ENCODE measurements at regions of chr3 and their contacts with region 1.

Region 1: DNA sequence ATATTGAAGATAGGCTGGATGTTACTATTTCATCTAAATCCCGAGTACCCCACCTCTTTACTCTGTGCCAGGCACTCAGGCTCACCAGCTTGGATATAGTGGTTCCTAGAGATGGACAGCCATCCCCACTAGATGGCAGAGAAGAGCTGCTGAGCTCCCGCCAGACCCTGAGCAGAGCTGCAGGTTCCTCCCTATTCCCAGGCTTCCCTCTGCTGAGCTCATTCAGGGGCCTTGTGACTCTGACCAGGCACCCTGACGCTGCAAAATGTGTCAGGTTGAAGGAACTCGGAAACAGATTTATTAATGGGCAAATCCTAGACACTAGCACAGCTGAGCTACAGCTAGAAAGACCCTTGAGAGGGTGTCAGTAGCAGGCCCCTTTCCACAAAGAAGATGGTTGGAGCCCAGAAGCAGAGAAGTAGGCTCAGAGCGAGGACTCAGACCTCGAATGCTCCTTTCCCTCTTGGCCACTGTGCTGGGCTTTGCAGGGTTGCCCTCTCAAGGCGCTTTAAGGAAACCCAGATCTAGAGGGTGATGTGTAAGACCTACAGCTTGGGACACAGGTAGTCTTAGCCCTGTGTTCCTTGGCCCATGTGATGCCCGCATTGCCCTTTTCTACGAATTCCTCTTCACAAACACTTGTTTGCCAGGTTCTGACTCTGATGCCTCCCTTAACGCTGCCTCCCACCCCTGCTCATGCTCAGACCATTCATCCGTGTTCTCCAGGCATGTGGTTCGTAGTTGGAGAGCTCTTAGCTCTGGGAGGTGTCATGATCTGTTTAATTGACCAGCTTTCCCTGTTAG is 38.0 kb upstream of the RHO start:
- DNase-seq: peak; percentile 85
- H3K4me3 Mint-ChIP-seq: no peak overlapping the region
- H3K27ac Mint-ChIP-seq: no peak overlapping the region
- H3K4me1 Mint-ChIP-seq: peaks cover 28% of the 10 kb centered on the region
- H3K27me3 Mint-ChIP-seq: no peaks in the 10 kb centered on the region
- CTCF ChIP-seq: peak; percentile 93

Region 2: DNA sequence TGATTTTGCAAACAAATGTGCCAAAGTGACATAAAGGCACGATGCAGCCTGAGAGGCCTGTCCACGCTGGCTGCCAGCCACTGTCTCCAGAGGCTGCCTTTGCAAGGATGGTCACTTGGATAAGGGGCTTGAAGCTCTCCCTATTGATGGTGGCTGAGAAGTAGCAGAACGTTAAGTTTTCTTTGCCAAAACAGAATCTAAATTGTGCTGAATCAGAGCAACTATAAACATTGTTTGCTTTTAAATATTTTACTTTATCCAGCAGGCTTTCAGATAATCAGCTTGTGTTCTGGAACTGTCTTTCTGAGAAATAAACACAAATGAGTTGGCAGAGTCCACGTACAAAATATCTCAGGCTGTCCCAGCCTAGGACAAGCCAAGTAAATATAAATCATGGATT is 283.0 kb before region 1 on chr3:
- CTCF ChIA-PET with region 1: no interaction called
- POLR2A ChIA-PET with region 1: no interaction called
- intact Hi-C with region 1: no loop called
- DNase-seq: no peak
- H3K4me3 Mint-ChIP-seq: no peak overlapping the region
- H3K27ac Mint-ChIP-seq: no peak overlapping the region
- H3K4me1 Mint-ChIP-seq: peaks cover 12% of the 10 kb centered on the region
- H3K27me3 Mint-ChIP-seq: no peaks in the 10 kb centered on the region
- CTCF ChIP-seq: no peak

Region 3: DNA sequence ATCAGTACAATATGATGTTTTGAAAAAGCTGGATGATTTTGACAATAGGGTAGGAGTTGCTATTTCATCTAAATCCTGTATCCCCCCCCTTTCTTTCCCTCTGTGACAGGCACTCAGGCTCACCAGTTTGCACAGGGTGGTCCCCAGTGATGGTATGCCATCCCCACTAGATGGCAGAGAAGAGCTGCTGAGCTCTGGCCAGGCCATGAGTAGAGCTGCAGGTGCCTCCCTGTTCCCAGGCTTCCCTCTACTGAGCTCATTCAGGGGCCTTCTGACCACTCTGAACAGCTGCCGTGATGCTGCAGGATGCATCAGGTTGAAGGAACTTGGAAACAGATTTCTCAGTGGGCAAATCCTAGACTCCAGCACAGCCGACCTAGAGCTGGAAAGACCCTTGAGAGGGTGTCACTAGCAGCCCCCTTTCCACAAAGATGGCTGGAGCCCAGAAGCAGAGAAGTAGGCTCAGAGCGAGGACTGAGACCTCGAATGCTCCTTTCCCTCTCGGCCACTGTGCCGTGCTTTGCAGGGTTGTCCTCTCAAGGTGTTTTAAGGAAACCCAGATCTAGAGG is 107.1 kb before region 1 on chr3:
- CTCF ChIA-PET with region 1: interaction called, 4 read pairs
- POLR2A ChIA-PET with region 1: no interaction called
- intact Hi-C with region 1: loop called (anchors 5 kb)
- DNase-seq: peak; percentile 77
- H3K4me3 Mint-ChIP-seq: no peak overlapping the region
- H3K27ac Mint-ChIP-seq: no peak overlapping the region
- H3K4me1 Mint-ChIP-seq: no peaks in the 10 kb centered on the region
- H3K27me3 Mint-ChIP-seq: no peaks in the 10 kb centered on the region
- CTCF ChIP-seq: peak; percentile 61

Region 4: GRCh38 chr3:129439817-129440617 is 50.4 kb before region 1 on chr3 and contains the starts of genes IFT122 and MBD4:
- CTCF ChIA-PET with region 1: interaction called, 17 read pairs
- POLR2A ChIA-PET with region 1: interaction called, 75 read pairs
- intact Hi-C with region 1: loop called (anchors 2 kb)
- DNase-seq: peak; percentile 99
- H3K4me3 Mint-ChIP-seq: peak within 1 kb of the TSS; percentile 83
- H3K27ac Mint-ChIP-seq: peak within 1 kb of the TSS; percentile 96
- H3K4me1 Mint-ChIP-seq: peaks cover 49% of the 10 kb centered on the region
- H3K27me3 Mint-ChIP-seq: no peaks in the 10 kb centered on the region
- CTCF ChIP-seq: no peak
- total RNA-seq, gene IFT122: 18.7 and 21.0 TPM in 2 replicates
- total RNA-seq, gene MBD4: 30.6 and 35.8 TPM in 2 replicates

Region 5: DNA sequence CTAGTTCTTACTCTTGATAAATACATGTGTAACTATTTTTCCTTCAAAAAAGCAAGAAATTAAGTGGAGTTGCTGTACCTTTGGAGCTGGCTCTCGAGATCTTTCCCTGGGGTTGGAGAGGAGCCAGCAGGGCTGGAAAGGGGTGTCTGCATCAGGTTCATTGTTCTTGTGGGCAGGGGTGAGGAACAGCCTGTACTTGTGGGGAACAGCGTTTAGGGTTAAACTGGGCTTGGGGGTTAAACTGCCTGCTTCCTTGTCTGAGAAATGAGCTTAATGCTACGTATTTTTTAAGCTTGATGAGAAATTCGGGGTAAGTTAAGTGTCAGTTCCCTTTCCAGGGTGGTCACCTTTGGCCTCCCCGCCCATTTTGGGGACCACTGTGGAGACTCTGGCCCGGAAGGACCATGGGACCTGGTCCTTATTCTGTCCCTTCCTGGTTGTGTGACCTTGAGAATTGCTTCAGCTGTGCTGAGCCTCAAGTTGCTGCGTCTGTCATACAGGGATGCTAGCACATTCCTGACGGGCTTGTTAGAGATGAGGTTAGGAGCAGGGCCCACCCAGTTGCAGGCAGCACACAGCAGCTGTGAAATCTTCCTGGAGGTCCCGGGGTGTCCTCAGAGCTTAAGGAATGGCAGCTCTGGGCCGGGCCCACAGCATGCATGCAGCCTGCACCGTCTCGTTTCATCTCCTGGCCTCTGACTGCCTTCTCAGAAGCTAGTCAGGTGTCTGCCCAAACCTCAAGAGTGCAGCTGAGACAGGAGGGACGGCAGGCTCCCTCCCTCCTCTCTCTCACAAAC is 64.1 kb after region 1 on chr3:
- CTCF ChIA-PET with region 1: interaction called, 10 read pairs
- POLR2A ChIA-PET with region 1: no interaction called
- intact Hi-C with region 1: no loop called
- DNase-seq: no peak
- H3K4me3 Mint-ChIP-seq: no peak overlapping the region
- H3K27ac Mint-ChIP-seq: no peak overlapping the region
- H3K4me1 Mint-ChIP-seq: peaks cover 1% of the 10 kb centered on the region
- H3K27me3 Mint-ChIP-seq: no peaks in the 10 kb centered on the region
- CTCF ChIP-seq: no peak

Region 6: GRCh38 chr3:129627429-129628168 is 137.2 kb after region 1 on chr3:
- CTCF ChIA-PET with region 1: interaction called, 16 read pairs
- POLR2A ChIA-PET with region 1: interaction called, 13 read pairs
- intact Hi-C with region 1: loop called (anchors 2 kb)
- DNase-seq: peak; percentile 92
- H3K4me3 Mint-ChIP-seq: peak overlapping the region; percentile 71
- H3K27ac Mint-ChIP-seq: peak overlapping the region; percentile 74
- H3K4me1 Mint-ChIP-seq: peaks cover 20% of the 10 kb centered on the region
- H3K27me3 Mint-ChIP-seq: no peaks in the 10 kb centered on the region
- CTCF ChIP-seq: peak; percentile 63

Region 7: DNA sequence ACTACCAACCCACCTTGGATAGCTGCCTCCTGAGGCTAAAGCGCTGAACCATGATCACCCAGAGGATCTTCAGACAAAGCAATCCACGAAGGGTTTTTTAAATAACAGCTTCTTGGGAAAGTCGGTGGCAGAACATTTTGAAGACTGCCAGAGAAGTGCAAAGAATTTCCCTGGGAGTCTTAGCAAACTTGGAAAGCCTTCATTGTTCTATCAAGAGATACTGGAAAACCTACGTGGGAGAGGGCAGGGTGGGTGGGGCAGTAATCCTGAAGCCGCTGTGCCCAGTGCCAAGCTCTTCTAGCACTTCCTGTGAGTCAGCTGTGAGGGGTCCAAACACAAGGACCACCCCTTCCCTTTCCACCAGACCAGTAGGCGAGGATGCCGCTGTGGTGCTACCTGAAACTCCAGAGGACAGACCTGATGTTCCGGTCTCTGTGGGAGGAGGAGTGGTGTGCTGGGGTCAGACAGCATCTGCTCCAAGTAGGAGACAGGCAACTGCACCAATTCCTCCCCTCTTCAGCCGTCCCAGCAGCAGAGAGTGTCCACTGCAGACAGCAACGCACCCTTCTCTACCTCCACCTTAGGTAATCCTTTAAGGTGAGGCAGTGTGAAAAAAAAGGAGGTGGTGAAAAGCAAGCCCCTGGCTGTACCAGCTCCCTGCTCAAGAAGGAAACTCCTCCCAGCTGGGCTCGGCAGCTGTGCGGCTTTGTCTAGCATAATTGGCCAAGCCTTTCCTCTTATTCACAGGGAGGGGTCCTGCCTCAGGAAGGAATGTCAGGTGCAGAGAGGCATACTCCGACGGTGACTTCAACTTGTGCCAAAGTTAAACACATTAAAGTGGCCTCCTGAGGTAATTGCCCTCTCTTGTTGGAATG is 304.1 kb after region 1 on chr3:
- CTCF ChIA-PET with region 1: interaction called, 5 read pairs
- POLR2A ChIA-PET with region 1: interaction called, 11 read pairs
- intact Hi-C with region 1: no loop called
- DNase-seq: peak; percentile 84
- H3K4me3 Mint-ChIP-seq: peak overlapping the region; percentile 70
- H3K27ac Mint-ChIP-seq: peak overlapping the region; percentile 82
- H3K4me1 Mint-ChIP-seq: peaks cover 33% of the 10 kb centered on the region
- H3K27me3 Mint-ChIP-seq: no peaks in the 10 kb centered on the region
- CTCF ChIP-seq: no peak

Region 8: DNA sequence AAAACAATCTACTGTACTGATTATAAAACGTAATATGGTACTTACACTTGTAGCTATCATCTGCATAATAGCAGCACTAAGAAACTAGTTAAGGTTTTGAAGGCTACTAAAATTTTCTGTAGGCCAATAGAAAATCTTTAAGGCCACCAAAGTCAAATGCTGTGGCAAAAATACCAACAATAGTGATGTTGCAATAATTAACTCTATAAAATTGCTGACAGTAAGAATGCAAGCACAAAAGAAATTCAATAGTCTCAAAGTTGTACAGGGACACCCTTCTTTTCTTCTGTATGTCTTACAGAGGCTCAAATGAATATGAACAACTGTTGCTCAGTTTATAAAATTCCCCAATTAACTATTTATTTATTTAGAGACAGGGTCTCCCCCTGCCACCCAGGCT is 341.1 kb after region 1 on chr3:
- CTCF ChIA-PET with region 1: interaction called, 91 read pairs
- POLR2A ChIA-PET with region 1: interaction called, 4 read pairs
- intact Hi-C with region 1: loop called (anchors 1 kb)
- DNase-seq: no peak
- H3K4me3 Mint-ChIP-seq: no peak overlapping the region
- H3K27ac Mint-ChIP-seq: no peak overlapping the region
- H3K4me1 Mint-ChIP-seq: peaks cover 14% of the 10 kb centered on the region
- H3K27me3 Mint-ChIP-seq: no peaks in the 10 kb centered on the region
- CTCF ChIP-seq: no peak

Region 9: DNA sequence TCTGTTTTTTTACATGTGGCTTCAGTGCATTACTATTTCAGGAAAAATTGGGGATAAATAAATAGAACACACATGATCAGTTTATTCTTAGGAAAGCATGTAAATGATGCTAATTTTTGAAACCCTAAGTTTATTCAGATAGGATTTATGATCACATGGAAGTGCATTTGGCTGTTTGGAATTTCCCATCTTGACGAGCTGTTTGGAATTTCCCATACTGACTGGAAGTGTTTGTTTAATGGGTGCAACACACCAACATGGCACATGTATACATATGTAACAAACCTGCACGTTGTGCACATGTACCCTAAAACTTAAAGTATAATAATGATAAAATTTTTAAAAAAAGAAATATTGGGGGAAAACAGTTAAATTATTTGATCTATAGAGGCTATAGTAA is 1106.0 kb after region 1 on chr3:
- CTCF ChIA-PET with region 1: no interaction called
- POLR2A ChIA-PET with region 1: no interaction called
- intact Hi-C with region 1: no loop called
- DNase-seq: no peak
- H3K4me3 Mint-ChIP-seq: no peak overlapping the region
- H3K27ac Mint-ChIP-seq: no peak overlapping the region
- H3K4me1 Mint-ChIP-seq: no peaks in the 10 kb centered on the region
- H3K27me3 Mint-ChIP-seq: peaks cover 33% of the 10 kb centered on the region
- CTCF ChIP-seq: no peak

Measured in MCF 10A (cell line).